Stomach (tissue), 19 donors: ENCODE measurements at regions of chr2 and their contacts with region 1.

Region 1: DNA sequence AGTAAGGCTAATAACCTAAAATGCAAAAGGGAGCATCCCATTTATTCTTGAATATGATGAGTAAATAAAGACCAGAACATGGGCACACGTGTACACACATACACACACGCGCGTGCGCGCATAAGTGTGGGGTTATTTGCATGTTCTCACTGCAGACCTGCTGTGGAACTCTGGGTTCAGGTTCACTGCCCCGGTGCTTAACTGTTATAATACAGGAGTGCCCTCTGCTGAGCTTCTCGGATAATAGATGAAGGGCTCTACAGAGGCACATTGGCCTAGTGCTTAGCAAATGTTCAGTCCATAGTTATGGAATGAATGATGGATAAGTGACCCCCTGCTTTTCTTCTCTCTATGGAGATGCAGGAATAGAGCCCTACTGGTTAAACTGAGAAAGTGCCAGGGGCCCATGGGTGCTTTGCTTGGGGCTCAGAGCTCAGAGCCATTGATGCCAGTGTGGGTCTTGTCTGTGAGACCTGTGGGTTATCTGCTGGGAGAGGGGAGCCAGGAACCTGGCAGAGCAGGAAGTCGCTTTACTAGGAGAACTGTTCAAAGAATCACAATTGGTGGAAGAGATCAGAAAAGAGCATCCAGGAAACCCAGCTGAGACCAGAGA is 3.6 kb upstream of the ARL4C start:
- DNase-seq: peak; percentile 60 to 81
- H3K4me3 ChIP-seq: no peak overlapping the region
- H3K27ac ChIP-seq: no peak overlapping the region
- H3K4me1 ChIP-seq: peaks cover 8 to 18% (median 16%) of the 10 kb centered on the region in 4 donors
- H3K27me3 ChIP-seq: peaks cover 0 to 9% (median 6%) of the 10 kb centered on the region in 3 donors
- CTCF ChIP-seq: peak in 5 of 7 experiments; percentile 18 to 52 (median 36)
- EP300 ChIP-seq: no peak
- POLR2A ChIP-seq: no peak

Region 2: DNA sequence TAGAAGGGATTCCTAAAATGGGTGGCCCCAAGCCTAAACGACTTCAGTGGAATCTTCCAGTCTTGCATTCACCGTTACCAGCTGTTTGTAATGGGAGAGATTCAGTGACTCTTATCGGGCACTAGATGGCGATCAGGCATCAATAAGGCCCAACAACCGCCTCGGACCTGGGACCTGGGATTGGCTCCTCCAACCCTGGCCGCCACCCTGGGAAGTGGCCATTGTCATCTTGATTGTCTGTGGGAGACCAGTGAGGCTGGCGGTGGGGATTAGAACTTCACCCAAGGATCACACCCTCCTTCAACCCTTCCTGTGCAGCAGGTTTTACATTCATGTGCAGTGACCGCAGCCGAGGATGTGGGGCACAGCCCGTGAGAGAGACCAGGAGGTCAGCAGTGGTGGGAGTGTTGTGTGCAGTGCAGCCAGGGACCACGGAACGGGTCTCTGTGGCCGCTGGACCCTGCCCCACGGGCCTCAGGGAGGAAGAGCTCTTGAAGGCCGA is 364.7 kb before region 1 on chr2:
- intact Hi-C with region 1: loop called (anchors 10 kb)
- DNase-seq: peak; percentile 53 to 87
- H3K4me3 ChIP-seq: no peak overlapping the region
- H3K27ac ChIP-seq: no peak overlapping the region
- H3K4me1 ChIP-seq: peaks cover 0 to 14% (median 4%) of the 10 kb centered on the region in 4 donors
- H3K27me3 ChIP-seq: peaks cover 0 to 10% (median 0%) of the 10 kb centered on the region in 3 donors
- CTCF ChIP-seq: peak in 5 of 7 experiments; percentile 44 to 71 (median 63)
- EP300 ChIP-seq: no peak
- POLR2A ChIP-seq: no peak

Region 3: GRCh38 chr2:234288974-234289455 is 211.5 kb before region 1 on chr2:
- intact Hi-C with region 1: loop called (anchors 10 kb)
- DNase-seq: peak; percentile 74 to 82
- H3K4me3 ChIP-seq: no peak overlapping the region
- H3K27ac ChIP-seq: peak overlapping the region in 2 of 5 donors; percentile 60 to 66
- H3K4me1 ChIP-seq: peaks cover 0 to 33% (median 7%) of the 10 kb centered on the region in 4 donors
- H3K27me3 ChIP-seq: no peaks in the 10 kb centered on the region
- CTCF ChIP-seq: peak in 5 of 7 experiments; percentile 70 to 86 (median 80)
- EP300 ChIP-seq: no peak
- POLR2A ChIP-seq: no peak

Region 4: DNA sequence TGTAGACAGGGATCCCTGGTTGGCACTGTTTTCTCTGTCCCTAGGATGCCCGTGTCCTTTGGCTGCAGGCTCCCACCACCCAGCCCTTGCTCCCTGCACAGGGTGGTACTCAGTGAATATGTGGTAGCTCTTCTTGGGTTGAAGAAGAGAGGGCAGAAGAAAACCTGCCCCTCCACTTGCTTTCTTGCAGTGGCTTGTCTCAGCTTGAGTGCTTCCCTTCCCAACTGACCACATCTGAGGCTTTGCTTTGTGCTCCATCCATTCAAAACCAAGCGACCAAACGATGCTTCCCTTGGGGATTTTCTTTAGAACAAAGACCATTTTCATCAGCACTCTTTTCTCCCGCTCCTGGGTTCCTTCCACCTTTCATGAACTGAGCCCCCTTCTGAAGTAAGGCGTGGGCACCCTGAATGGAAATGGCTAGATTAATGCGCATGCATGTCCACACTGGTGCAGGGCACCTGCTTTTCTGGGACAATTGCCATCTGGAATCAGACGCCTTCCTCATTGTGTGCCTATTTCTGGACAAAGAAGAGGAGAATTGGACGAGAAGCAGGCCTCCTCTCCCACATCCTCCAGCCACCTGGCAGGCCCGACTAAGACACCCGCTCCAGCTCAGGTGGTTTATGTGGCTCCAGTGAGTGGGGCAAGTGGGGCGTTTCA is 62.7 kb before region 1 on chr2:
- intact Hi-C with region 1: no loop called
- DNase-seq: no peak
- H3K4me3 ChIP-seq: no peak overlapping the region
- H3K27ac ChIP-seq: no peak overlapping the region
- H3K4me1 ChIP-seq: peaks cover 0 to 5% (median 0%) of the 10 kb centered on the region in 4 donors
- H3K27me3 ChIP-seq: no peaks in the 10 kb centered on the region
- CTCF ChIP-seq: no peak
- EP300 ChIP-seq: no peak
- POLR2A ChIP-seq: no peak

Region 5: DNA sequence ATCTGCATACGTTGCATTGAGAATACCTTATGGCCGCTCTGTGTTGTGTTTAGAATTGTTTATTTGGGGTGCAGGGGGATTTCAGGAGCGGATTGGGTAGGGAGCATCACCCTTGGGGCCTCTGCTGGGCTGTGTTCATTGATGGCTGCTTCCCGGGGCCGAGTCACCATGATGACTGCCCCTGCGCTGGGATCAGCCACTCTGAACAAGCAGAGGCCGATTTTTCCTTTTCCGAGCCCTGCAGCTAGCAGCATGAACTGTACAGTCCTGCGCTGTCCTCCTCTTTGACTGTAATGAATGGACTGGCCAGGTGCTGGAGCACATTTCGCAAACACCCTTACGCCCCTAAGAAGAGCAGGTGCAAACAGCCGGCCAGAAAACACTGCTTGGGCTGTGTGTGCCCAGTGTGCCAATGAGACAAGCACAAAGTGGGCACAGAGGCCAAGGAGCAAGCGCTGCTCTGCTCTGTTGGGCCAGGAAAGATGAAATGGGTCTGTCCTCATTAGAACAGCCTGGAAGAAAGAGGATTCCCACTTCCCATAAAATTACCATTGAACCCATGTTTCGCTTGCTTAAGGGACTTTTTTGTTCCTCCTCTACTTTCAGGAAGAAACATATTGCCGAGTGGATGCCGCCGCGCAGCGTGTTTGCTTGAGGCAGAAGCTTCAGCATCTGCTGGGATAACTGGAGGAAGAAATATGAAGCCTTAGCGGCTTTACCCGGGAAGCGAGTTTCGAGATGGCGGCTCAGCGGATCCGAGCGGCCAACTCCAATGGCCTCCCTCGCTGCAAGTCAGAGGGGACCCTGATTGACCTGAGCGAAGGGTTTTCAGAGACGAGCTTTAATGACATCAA is 534.0 kb after region 1 on chr2:
- intact Hi-C with region 1: no loop called
- DNase-seq: no peak
- H3K4me3 ChIP-seq: no peak overlapping the region
- H3K27ac ChIP-seq: peak overlapping the region in 1 of 5 donors; percentile 16
- H3K4me1 ChIP-seq: peaks cover 0 to 25% (median 9%) of the 10 kb centered on the region in 4 donors
- H3K27me3 ChIP-seq: no peaks in the 10 kb centered on the region
- CTCF ChIP-seq: no peak
- EP300 ChIP-seq: no peak
- POLR2A ChIP-seq: no peak